Head of caudate nucleus (tissue), 42 donors: ENCODE measurements at regions of chr22 and their contacts with region 1.

Region 1: GRCh38 chr22:20174785-20175596 is 24.1 kb upstream of the CCDC188 start:
- DNase-seq: no peak

Region 2: GRCh38 chr22:20258584-20259326 is 83.8 kb after region 1 on chr22:
- intact Hi-C with region 1: loop called (anchors 5 kb)
- DNase-seq: no peak